K562 (cell line): ENCODE measurements at regions of chr2 and their contacts with region 1.

Region 1: DNA sequence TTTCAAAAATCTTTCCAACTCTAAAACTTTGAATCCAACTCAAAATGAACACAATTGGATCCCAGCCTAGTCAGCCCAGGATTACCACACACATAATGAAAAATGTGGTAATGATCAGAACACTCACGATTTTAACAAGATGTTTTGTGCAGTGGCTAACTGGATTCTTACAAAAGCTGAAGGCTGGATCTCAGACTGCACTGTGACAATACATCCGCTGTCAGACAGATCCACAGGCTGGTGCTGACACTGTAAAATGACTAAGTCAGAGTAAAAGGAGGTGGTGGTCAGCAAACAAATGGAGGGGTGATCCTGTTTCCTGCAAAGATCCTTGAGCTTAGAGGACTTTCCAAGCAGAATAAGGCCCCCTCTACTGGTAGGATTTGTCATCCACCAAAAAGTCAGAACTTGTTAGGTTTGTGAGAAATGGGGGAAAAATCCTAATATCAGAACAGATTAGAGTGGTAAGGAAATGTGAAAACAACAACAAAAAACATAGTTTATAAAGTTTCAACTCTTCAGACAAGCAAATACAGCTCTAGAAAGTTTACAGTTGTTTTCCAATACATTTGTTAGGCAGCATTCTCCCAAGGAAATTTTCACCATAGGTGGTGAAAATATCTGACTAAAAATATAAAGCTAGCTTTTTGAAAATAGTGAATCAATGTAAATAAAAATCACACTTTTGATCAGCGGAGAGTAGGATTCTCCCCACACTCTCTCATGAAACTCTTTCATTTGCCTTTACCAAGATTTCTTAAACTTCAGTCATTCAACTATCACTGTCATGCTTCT is 211.9 kb downstream of the AGPS start:
- DNase-seq: peak; percentile 45 to 72 (median 53)
- ATAC-seq: peak; percentile 88
- H3K4me3 ChIP-seq: no peak overlapping the region
- H3K27ac ChIP-seq: no peak overlapping the region
- H3K4me1 ChIP-seq: no peaks in the 10 kb centered on the region
- H3K27me3 ChIP-seq: no peaks in the 10 kb centered on the region; a peak in 1 of 5 replicates
- CTCF ChIP-seq: peak; percentile 67 to 79 (median 77)
- EP300 ChIP-seq: no peak
- POLR2A ChIP-seq: no peak
- RAD21 ChIP-seq: peak; percentile 69 to 87

Region 2: DNA sequence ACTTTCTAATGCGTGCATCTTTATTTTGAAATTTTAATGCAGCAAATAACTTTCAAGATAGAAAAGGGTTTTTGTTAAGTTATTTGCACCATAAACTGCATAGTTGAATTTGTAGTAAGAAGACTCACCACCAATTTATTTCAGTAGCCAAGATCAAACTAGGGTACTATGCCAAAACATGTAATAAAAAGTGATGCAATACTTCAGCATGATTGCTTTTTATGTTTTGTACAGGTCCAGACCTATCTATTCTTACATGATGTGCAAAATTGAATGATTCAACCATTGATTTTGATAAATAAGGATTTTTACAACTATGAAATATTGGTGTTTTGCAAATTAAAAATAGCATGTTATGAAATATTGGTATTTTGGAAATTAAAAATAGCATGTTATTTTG is 185.2 kb before region 1 on chr2:
- CTCF ChIA-PET with region 1: no interaction called
- POLR2A ChIA-PET with region 1: no interaction called
- in situ Hi-C with region 1: no loop called
- intact Hi-C with region 1: loop called (anchors 5 kb)
- DNase-seq: no peak
- ATAC-seq: peak; percentile 37; the same call in 1 of the 3 replicates
- H3K4me3 ChIP-seq: no peak overlapping the region
- H3K27ac ChIP-seq: no peak overlapping the region
- H3K4me1 ChIP-seq: no peaks in the 10 kb centered on the region
- H3K27me3 ChIP-seq: no peaks in the 10 kb centered on the region
- CTCF ChIP-seq: no peak
- EP300 ChIP-seq: no peak
- POLR2A ChIP-seq: no peak
- RAD21 ChIP-seq: no peak

Region 3: DNA sequence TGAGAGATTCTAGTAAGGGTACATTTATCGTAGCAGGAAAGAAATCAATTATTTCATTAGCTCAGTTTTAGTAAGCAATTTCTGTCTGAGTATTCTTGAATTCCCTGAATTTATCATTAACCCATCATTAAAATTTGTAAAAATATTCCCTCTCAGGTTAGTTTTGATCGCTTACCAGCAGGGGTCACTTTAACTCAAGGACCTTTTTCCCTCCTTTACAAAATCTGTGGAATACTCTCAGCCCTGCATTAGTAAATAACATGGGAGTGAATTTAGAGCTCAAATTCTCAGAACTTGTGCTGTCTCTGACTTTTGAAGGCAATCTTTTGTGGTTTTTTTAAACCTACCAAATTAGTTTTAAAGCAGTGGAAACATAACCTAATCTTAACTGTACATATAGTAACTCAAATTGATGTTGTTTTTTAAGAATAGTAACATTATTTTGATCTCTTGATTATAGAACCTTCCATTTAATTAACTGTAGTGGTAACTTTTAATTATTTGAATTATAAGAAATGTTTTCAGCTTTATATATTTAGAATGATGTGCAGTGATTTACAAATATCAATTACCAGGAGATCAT is 114.7 kb before region 1 on chr2:
- CTCF ChIA-PET with region 1: interaction called, 18 read pairs
- POLR2A ChIA-PET with region 1: no interaction called
- in situ Hi-C with region 1: no loop called
- intact Hi-C with region 1: loop called (anchors 1 kb)
- DNase-seq: peak in 3 of 4 experiments; percentile 19 to 35 (median 21)
- ATAC-seq: peak; percentile 70
- H3K4me3 ChIP-seq: no peak overlapping the region
- H3K27ac ChIP-seq: no peak overlapping the region
- H3K4me1 ChIP-seq: no peaks in the 10 kb centered on the region
- H3K27me3 ChIP-seq: no peaks in the 10 kb centered on the region
- CTCF ChIP-seq: peak; percentile 36 to 83 (median 50); a peak in 5 of 6 replicates
- EP300 ChIP-seq: no peak
- POLR2A ChIP-seq: no peak
- RAD21 ChIP-seq: peak; percentile 74 to 84

Region 4: GRCh38 chr2:177552422-177553175 is 51.9 kb before region 1 on chr2:
- CTCF ChIA-PET with region 1: no interaction called
- POLR2A ChIA-PET with region 1: interaction called, 4 read pairs
- in situ Hi-C with region 1: no loop called
- intact Hi-C with region 1: loop called (anchors 5 kb)
- DNase-seq: peak; percentile 94 to 95 (median 94)
- ATAC-seq: peak; percentile 95
- H3K4me3 ChIP-seq: peak overlapping the region; percentile 62
- H3K27ac ChIP-seq: peak overlapping the region; percentile 98
- H3K4me1 ChIP-seq: peaks cover 13 to 17% of the 10 kb centered on the region in 2 experiments
- H3K27me3 ChIP-seq: no peaks in the 10 kb centered on the region
- CTCF ChIP-seq: peak in 1 of 3 experiments; percentile 27; a peak in 1 of 6 replicates
- EP300 ChIP-seq: peak; percentile 22; the same call in 1 of the 2 replicates
- POLR2A ChIP-seq: peak; percentile 91
- RAD21 ChIP-seq: 0 out of 4 replicates have a peak, but pooled peaks of 1 of the 2 experiments have one; percentile 22

Region 5: GRCh38 chr2:177633910-177634294 is 29.4 kb after region 1 on chr2:
- CTCF ChIA-PET with region 1: no interaction called
- POLR2A ChIA-PET with region 1: no interaction called
- in situ Hi-C with region 1: no loop called
- intact Hi-C with region 1: no loop called
- DNase-seq: no peak
- ATAC-seq: no peak
- H3K4me3 ChIP-seq: peak overlapping the region; percentile 28
- H3K27ac ChIP-seq: peak overlapping the region; percentile 53; the same call in 2 of the 3 replicates
- H3K4me1 ChIP-seq: peaks cover 0 to 5% of the 10 kb centered on the region in 2 experiments; a peak in 3 of 5 replicates
- H3K27me3 ChIP-seq: no peaks in the 10 kb centered on the region; a peak in 1 of 5 replicates
- CTCF ChIP-seq: no peak
- EP300 ChIP-seq: no peak
- POLR2A ChIP-seq: no peak
- RAD21 ChIP-seq: no peak